Endothelial cell of umbilical vein (primary cell): ENCODE measurements at regions of chr14 and their contacts with region 1.

Region 1: GRCh38 chr14:63174760-63175211 is 29.5 kb upstream of the RHOJ start:
- DNase-seq: peak; percentile 96
- H3K4me3 ChIP-seq: peak overlapping the region in 1 of 3 experiments; percentile 45
- H3K27ac ChIP-seq: peak overlapping the region; percentile 72
- H3K4me1 ChIP-seq: peaks cover 29% of the 10 kb centered on the region
- H3K27me3 ChIP-seq: no peaks in the 10 kb centered on the region
- CTCF ChIP-seq: peak; percentile 60 to 67
- POLR2A ChIP-seq: no peak

Region 2: DNA sequence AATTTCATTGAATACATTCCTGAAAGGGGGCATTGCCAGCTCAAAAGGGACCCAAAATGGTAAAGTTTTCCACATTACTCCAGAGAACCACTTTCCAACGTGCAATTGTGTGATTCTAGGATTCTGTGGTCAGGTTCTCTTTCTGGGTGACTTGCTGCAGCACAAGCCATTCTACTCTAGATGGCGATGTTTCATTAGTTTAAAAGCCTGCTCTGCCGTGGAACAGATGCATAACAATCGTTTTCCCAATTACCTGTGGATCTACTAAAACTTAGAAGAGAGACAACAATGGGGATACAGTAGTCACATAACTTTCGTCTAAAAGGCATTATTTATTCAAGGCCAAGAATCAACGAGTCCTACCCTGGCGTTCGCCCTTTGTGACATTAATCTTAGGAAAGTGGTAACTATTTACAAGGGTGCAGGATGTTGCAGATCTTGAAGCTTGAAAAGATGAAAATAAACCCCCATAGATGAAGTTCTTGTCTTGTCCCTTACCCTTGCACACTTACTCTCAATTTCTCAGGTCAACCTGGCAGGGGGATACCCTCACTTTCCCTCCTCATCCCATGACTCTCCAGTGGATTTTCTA is 1011.7 kb before region 1 on chr14:
- CTCF ChIA-PET with region 1: no interaction called
- POLR2A ChIA-PET with region 1: no interaction called
- dilution Hi-C with region 1: no loop called
- intact Hi-C with region 1: loop called (anchors 2 kb)
- DNase-seq: peak; percentile 46
- H3K4me3 ChIP-seq: no peak overlapping the region
- H3K27ac ChIP-seq: no peak overlapping the region
- H3K4me1 ChIP-seq: no peaks in the 10 kb centered on the region
- H3K27me3 ChIP-seq: peaks cover 7 to 10% of the 10 kb centered on the region in 2 experiments
- CTCF ChIP-seq: peak; percentile 62 to 69
- POLR2A ChIP-seq: no peak

Region 3: GRCh38 chr14:63192085-63192484 is 17.3 kb after region 1 on chr14:
- CTCF ChIA-PET with region 1: interaction called, 15 read pairs
- POLR2A ChIA-PET with region 1: no interaction called
- dilution Hi-C with region 1: no loop called
- intact Hi-C with region 1: no loop called
- DNase-seq: peak; percentile 93
- H3K4me3 ChIP-seq: no peak overlapping the region
- H3K27ac ChIP-seq: peak overlapping the region; percentile 84
- H3K4me1 ChIP-seq: peaks cover 26% of the 10 kb centered on the region
- H3K27me3 ChIP-seq: no peaks in the 10 kb centered on the region
- CTCF ChIP-seq: no peak
- POLR2A ChIP-seq: peak; percentile 34

Region 4: DNA sequence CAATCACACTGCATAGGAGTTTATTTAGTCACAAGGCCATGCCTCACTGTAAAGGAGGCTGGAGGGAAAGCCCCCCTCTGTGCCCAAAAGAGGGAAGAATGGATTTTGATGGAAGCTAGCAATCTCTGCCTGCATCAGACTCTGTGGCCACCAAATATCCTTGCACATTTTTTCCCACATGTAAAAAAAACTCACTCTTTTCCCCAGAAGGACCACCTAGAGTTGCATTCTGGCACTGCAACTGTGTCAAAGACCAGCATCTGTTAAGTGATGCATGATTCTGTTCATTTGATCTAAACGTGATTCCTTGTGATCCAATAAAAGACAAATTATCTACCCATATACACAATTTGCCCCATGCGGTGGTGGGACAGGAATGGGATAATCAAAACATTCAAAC is 37.4 kb after region 1 on chr14:
- CTCF ChIA-PET with region 1: interaction called, 47 read pairs
- POLR2A ChIA-PET with region 1: interaction called, 5 read pairs
- dilution Hi-C with region 1: no loop called
- intact Hi-C with region 1: loop called (anchors 1 kb)
- DNase-seq: no peak
- H3K4me3 ChIP-seq: no peak overlapping the region
- H3K27ac ChIP-seq: no peak overlapping the region
- H3K4me1 ChIP-seq: peaks cover 85% of the 10 kb centered on the region
- H3K27me3 ChIP-seq: no peaks in the 10 kb centered on the region
- CTCF ChIP-seq: peak; percentile 14 to 34
- POLR2A ChIP-seq: peak; percentile 33

Region 5: DNA sequence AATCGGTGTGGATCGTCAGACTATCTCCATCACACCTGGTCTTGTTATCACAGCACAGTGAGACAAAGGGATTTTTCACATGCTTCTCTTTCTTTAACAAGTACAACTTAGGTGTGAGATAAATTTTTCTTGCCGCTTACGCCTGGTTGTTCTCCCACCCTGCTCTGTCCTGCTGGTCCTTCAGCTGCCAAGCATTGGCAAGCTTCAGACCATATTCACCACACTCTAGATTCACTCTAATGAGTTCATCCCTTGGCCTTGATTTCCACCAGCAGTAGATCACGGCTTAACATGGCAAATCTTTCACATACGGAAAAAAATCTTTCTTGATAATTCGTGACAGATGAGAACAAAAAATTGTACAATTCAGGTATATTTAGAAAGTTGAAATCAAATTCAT is 63.0 kb after region 1 on chr14:
- CTCF ChIA-PET with region 1: interaction called, 10 read pairs
- POLR2A ChIA-PET with region 1: no interaction called
- dilution Hi-C with region 1: no loop called
- intact Hi-C with region 1: no loop called
- DNase-seq: no peak
- H3K4me3 ChIP-seq: no peak overlapping the region
- H3K27ac ChIP-seq: no peak overlapping the region
- H3K4me1 ChIP-seq: no peaks in the 10 kb centered on the region
- H3K27me3 ChIP-seq: no peaks in the 10 kb centered on the region
- CTCF ChIP-seq: no peak
- POLR2A ChIP-seq: no peak

Region 6: DNA sequence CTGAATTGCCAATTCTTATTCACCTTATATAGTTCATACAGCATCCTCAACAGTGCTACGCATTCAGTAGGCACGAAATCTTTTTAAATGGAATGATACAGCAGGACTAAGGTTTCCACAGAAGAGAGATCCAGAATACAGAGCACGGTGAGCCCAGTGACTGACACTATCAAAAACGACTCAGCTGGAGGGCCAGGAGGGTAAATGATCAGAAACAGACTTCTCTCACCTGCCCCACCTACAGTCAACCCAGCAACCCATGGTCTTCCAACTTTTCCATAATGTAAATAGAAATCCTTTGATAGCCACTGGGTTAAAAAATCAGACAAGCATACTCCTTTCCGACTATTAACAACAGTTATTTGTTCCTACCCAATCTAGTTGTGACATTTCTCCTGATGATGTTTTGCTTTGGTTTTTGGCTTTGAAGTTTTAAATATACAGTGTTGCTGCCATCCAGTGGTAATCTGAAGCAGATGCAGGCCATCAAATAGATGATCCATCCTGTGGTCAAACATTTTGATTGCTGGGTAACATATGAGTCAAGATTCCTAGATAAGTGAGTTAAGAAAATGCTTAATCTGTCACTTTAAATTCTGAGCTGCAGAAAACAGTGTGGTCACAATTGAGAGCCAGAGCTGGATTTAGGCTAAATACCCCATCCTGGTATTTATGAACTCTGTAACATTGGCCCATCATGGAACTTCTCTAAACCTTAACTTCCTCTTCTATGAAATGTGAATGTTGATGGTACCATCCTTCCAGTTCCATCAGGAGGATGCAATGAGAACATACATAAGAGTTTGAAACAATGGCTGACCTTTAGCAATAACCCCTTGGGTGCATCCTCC is 101.9 kb after region 1 on chr14:
- CTCF ChIA-PET with region 1: interaction called, 70 read pairs
- POLR2A ChIA-PET with region 1: no interaction called
- dilution Hi-C with region 1: no loop called
- intact Hi-C with region 1: loop called (anchors 1 kb)
- DNase-seq: peak; percentile 64
- H3K4me3 ChIP-seq: no peak overlapping the region
- H3K27ac ChIP-seq: no peak overlapping the region
- H3K4me1 ChIP-seq: peaks cover 3% of the 10 kb centered on the region
- H3K27me3 ChIP-seq: no peaks in the 10 kb centered on the region
- CTCF ChIP-seq: peak; percentile 56 to 63
- POLR2A ChIP-seq: no peak